Naive thymus-derived CD4-positive, alpha-beta T cell (primary cell): ENCODE measurements at regions of chr2 and their contacts with region 1.

Region 1: DNA sequence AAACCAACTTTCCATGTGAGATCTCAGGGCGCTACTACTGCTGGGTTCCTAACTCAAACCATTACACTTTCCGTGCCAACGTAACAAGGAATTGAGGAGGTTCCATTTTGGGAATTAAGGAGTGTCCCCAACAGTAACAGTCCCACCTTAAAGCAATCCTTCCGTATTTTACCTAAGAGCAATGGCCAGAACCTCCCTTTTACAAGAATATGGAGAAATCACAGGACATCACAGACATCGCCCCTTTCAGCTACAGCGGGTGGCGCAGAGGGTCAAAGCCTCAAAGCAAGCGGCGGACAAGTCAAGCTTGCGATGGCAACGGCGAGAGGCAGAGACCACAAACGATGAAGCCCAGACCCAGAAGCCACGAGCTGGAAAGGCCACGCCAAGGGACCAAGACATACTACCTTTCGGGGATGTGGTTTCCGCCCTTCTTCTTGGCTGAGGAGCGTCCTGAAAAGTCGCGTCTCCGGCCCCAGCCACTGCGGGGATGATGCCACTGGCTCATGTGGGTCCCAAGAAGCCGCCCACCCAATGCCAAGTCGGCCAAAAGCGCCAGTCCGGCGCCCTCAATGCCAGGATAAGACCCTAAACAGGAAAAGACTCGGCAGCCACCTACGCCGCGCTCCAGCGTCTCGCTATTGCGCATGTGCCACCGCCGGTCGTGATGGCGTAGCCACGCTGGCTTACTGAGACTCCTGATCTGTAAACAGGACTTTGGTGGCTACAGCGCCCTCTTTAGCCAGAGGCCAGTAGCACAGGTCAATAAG is at the start of gene DUSP11:
- DNase-seq: peak; percentile 92 to 98 (median 95)
- ATAC-seq: peak; percentile 100
- H3K4me3 ChIP-seq: peak within 1 kb of the TSS; percentile 87
- H3K4me3 Mint-ChIP-seq: peak within 1 kb of the TSS; percentile 95 to 100 (median 98)
- H3K27ac ChIP-seq: peak within 1 kb of the TSS; percentile 95
- H3K27ac Mint-ChIP-seq: peak within 1 kb of the TSS; percentile 95 to 100 (median 98)
- H3K4me1 ChIP-seq: peaks cover 0 to 16% of the 10 kb centered on the region in 2 donors
- H3K4me1 Mint-ChIP-seq: peaks cover 23 to 49% (median 35%) of the 10 kb centered on the region in 7 donors
- H3K27me3 ChIP-seq: no peaks in the 10 kb centered on the region
- H3K27me3 Mint-ChIP-seq: peaks cover 0 to 4% (median 4%) of the 10 kb centered on the region in 5 donors
- total RNA-seq, gene DUSP11: 32.0 to 54.1 (median 43.8) TPM

Region 2: DNA sequence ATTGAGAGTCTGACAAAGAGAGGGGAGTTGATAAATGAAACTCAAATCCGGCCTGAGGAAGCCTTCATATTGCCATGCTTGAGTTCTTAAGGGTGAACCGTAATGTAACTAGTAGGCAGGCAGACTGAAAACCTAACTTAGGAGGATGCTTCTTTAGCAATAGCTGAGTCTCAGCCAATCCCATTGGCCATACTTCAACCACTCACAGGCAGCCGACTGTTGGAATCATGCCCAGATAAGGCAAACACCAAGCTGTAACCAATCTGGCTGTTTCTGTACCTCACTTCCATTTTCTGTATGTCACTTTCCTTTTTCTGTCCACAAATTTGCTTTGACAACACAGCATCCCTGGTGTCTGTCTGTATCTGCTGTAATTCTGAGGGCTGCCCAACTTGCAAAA is 82.0 kb before region 1 on chr2:
- CTCF ChIA-PET with region 1: no interaction called
- POLR2A ChIA-PET with region 1: no interaction called
- intact Hi-C with region 1: loop called in 1 of 2 experiments (anchors 10 kb)
- DNase-seq: no peak
- ATAC-seq: no peak
- H3K4me3 ChIP-seq: no peak overlapping the region
- H3K4me3 Mint-ChIP-seq: no peak overlapping the region
- H3K27ac ChIP-seq: no peak overlapping the region
- H3K27ac Mint-ChIP-seq: no peak overlapping the region
- H3K4me1 ChIP-seq: no peaks in the 10 kb centered on the region
- H3K4me1 Mint-ChIP-seq: no peaks in the 10 kb centered on the region
- H3K27me3 ChIP-seq: no peaks in the 10 kb centered on the region
- H3K27me3 Mint-ChIP-seq: peaks cover 10 to 22% (median 11%) of the 10 kb centered on the region in 5 donors

Region 3: GRCh38 chr2:74374509-74375205 is 595.0 kb after region 1 on chr2:
- CTCF ChIA-PET with region 1: interaction called, 10 read pairs
- POLR2A ChIA-PET with region 1: no interaction called
- intact Hi-C with region 1: no loop called
- DNase-seq: no peak
- ATAC-seq: no peak
- H3K4me3 ChIP-seq: no peak overlapping the region
- H3K4me3 Mint-ChIP-seq: peak overlapping the region in 1 of 10 donors; percentile 58
- H3K27ac ChIP-seq: no peak overlapping the region
- H3K27ac Mint-ChIP-seq: peak overlapping the region in 3 of 9 donors; percentile 60 to 64 (median 62)
- H3K4me1 ChIP-seq: peaks cover 1 to 4% of the 10 kb centered on the region in 2 donors
- H3K4me1 Mint-ChIP-seq: peaks cover 13 to 25% (median 20%) of the 10 kb centered on the region in 7 donors
- H3K27me3 ChIP-seq: no peaks in the 10 kb centered on the region
- H3K27me3 Mint-ChIP-seq: no peaks in the 10 kb centered on the region